Activated CD8-positive, alpha-beta T cell treated with anti-CD3 and anti-CD28 coated beads, Interleukin-2, amount 10 ng/mL, durations not matched to agents 7 days and 5 days (primary cell): ENCODE measurements at regions of chr7 and their contacts with region 1.

Region 1: GRCh38 chr7:132541656-132542055 is 34.6 kb downstream of the PLXNA4 start:
- DNase-seq: no peak
- ATAC-seq: no peak
- H3K4me3 Mint-ChIP-seq: no peak overlapping the region
- H3K27ac Mint-ChIP-seq: no peak overlapping the region
- H3K4me1 Mint-ChIP-seq: peaks cover 60% of the 10 kb centered on the region
- H3K27me3 Mint-ChIP-seq: no peaks in the 10 kb centered on the region

Region 2: DNA sequence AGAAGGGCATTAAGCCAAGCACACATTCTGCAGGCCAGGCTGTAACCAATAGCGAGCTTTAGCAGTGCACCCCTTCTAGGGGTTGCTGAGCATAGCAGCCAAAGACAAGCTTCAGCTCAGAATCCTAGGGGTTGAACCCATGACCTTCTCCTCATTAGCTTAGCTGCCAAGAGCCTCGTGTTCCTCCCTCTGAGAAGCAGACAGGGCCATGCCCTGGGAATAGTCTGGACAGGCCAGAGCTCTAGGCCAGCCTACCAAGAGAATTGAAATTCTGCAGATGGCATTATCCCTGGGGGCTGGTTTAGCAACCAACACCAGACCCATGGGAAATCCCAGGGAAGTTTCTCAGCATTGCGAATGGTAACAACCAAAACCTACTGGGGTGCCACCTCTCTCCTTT is 42.6 kb before region 1 on chr7:
- CTCF ChIA-PET with region 1: no interaction called
- POLR2A ChIA-PET with region 1: no interaction called
- DNase-seq: no peak
- ATAC-seq: no peak
- H3K4me3 Mint-ChIP-seq: no peak overlapping the region
- H3K27ac Mint-ChIP-seq: no peak overlapping the region
- H3K4me1 Mint-ChIP-seq: peaks cover 6% of the 10 kb centered on the region
- H3K27me3 Mint-ChIP-seq: peaks cover 2% of the 10 kb centered on the region

Region 3: GRCh38 chr7:132518102-132518838 is 23.4 kb before region 1 on chr7:
- CTCF ChIA-PET with region 1: interaction called, 16 read pairs
- POLR2A ChIA-PET with region 1: no interaction called
- DNase-seq: peak; percentile 42
- ATAC-seq: no peak
- H3K4me3 Mint-ChIP-seq: no peak overlapping the region
- H3K27ac Mint-ChIP-seq: no peak overlapping the region
- H3K4me1 Mint-ChIP-seq: peaks cover 38% of the 10 kb centered on the region
- H3K27me3 Mint-ChIP-seq: no peaks in the 10 kb centered on the region

Region 4: GRCh38 chr7:132557489-132558044 is 15.9 kb after region 1 on chr7:
- CTCF ChIA-PET with region 1: interaction called, 22 read pairs
- POLR2A ChIA-PET with region 1: no interaction called
- DNase-seq: no peak
- ATAC-seq: peak; percentile 39
- H3K4me3 Mint-ChIP-seq: no peak overlapping the region
- H3K27ac Mint-ChIP-seq: peak overlapping the region; percentile 10
- H3K4me1 Mint-ChIP-seq: peaks cover 58% of the 10 kb centered on the region
- H3K27me3 Mint-ChIP-seq: peaks cover 21% of the 10 kb centered on the region

Region 5: GRCh38 chr7:132636616-132637015 is 95.0 kb after region 1 on chr7:
- CTCF ChIA-PET with region 1: no interaction called
- POLR2A ChIA-PET with region 1: no interaction called
- DNase-seq: no peak
- ATAC-seq: no peak
- H3K4me3 Mint-ChIP-seq: no peak overlapping the region
- H3K27ac Mint-ChIP-seq: no peak overlapping the region
- H3K4me1 Mint-ChIP-seq: peaks cover 6% of the 10 kb centered on the region
- H3K27me3 Mint-ChIP-seq: peaks cover 4% of the 10 kb centered on the region

Region 6: GRCh38 chr7:133091943-133092464 is 550.3 kb after region 1 on chr7:
- CTCF ChIA-PET with region 1: no interaction called
- POLR2A ChIA-PET with region 1: no interaction called
- DNase-seq: no peak
- ATAC-seq: no peak
- H3K4me3 Mint-ChIP-seq: no peak overlapping the region
- H3K27ac Mint-ChIP-seq: no peak overlapping the region
- H3K4me1 Mint-ChIP-seq: no peaks in the 10 kb centered on the region
- H3K27me3 Mint-ChIP-seq: peaks cover 2% of the 10 kb centered on the region